Esophagus muscularis mucosa (tissue), 4 donors: ENCODE measurements at regions of chr22 and their contacts with region 1.

Region 1: DNA sequence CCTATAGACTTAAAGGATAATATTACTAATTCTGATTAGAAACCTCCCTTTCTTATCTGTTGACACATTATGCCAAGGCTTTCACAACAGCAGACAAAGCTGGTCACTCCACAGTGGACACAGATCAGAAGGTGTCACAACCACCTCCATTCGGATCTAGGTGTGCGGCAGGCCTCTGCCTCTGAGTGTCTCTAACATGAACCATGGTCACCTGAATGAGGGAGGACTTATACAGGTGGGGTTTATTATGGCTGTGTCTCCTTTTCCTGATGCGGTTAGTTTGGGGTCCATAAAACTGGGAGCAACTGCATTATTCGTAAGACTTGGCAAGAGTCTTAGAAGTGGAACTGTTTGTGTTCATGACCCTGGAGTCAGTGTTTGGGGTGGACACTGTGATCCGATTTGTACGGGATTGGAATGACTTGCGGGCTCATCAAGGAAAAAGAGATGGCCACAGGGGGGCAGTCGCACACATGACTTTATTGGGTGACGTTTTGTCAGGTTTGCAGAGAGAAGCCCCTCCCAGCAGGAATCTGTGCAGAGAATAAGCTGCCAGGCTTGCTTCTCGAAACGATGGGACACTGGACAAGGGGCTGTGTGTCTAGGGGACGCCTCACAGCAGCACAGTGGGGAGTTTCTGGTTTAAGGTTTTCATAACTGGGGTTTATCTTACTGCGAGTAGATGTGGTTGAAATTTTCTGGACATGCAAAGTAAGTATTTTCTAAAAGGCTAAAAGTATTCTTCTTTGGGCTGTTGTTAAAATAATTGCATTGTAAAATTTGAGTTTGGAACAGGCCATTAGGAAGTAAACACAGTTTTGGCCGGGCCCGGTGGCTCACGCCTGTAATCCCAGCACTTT is 90.6 kb downstream of the GAB4 start:
- DNase-seq: no peak
- H3K4me3 ChIP-seq: no peak overlapping the region
- H3K27ac ChIP-seq: no peak overlapping the region
- H3K4me1 ChIP-seq: no peaks in the 10 kb centered on the region
- H3K27me3 ChIP-seq: peaks cover 0 to 72% (median 2%) of the 10 kb centered on the region in 4 donors
- CTCF ChIP-seq: peak; percentile 35 to 57 (median 40)
- EP300 ChIP-seq: no peak
- POLR2A ChIP-seq: no peak

Region 2: DNA sequence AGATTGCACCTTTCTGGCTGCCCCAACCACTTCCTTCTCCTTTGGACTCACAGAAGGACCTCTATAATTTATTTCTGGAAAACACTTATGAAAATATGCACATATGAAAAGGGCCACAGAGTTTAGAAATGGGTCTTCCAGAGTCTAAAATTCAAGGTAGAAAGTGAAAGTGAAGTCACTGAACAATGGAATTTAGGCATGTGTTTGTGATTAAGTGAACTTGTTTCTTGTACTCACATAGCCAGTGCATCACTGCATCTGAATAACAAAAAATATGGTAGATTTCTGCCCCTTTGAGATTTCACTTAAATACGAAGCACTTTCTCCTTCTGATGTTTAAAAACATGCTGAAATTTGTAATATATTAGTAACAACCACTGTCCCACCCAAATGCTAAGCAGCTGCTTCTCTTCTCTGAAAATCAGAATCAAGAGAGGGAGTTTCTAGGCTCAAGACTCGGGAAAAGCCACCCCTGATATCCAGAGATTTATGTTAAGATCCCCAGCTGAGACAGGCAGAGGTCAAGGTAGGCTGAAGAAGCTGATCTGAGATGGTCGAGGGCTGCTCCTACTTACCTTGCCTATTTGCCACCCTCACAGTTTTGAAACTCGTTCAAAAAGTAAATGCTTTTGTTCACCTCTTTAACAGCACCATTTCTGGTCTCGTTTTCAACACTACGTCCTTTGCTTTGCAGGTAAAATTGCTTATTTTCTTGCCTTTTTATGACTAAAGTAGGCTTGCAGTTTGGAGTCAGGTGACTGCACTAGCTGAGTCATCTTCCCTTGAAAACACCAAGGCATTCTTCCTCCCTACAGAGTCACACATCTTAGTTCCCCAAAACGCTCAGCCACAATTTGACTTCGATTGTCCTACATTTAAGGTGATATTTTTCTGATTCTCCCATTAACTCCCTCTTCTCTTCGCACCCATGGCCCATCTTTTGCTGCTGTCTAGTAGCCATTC is 92.4 kb before region 1 on chr22 and contains the start of gene XKR3:
- intact Hi-C with region 1: no loop called
- DNase-seq: no peak
- H3K4me3 ChIP-seq: peak within 1 kb of the TSS in 2 of 4 donors; percentile 17 to 19
- H3K27ac ChIP-seq: no peak within 1 kb of the TSS
- H3K4me1 ChIP-seq: peaks cover 0 to 3% (median 0%) of the 10 kb centered on the region in 4 donors
- H3K27me3 ChIP-seq: no peaks in the 10 kb centered on the region
- CTCF ChIP-seq: no peak
- EP300 ChIP-seq: no peak
- POLR2A ChIP-seq: no peak
- total RNA-seq, gene XKR3: not detected

Region 3: DNA sequence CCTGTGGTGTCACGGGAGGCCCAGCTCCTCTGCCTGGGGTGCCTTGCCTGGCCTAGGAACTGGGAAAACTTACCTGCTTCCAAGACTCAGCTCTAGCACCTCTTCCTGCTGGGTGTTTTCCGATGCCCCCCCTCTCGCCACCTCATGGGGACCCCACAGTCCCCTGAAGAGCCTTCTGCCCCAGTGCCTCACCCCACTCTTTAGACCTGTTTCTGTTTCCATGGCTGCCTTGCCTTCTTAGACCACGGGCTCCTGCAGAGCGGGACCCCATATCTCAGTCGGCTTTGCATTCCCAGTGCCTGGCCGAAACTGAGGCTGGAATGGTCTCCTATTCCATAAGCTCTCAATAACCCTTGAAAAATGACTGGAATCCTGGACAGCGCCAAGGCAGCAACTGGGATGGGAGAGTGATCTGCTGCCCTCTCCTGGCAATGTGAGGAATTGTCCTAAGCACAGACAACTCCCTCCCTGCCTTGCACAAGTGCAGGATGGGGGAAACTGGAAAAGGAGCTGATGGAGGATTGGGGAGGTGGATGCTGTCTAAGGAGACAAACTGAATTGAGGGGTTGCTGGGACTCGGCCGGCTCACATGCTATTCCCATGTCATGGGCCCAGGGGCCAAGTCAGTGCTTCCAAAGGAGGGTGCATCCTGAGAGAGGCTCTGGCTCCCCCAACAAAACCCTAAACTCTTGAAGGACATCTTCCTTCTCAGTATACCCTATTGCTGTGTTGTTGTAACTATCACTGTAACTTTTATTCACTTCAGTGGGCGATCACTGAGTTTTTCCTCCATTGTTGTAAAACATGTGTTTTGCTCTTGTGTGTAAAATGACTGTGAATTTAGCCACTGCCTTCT is 140.8 kb after region 1 on chr22:
- intact Hi-C with region 1: loop called (anchors 5 kb)
- DNase-seq: peak; percentile 94
- H3K4me3 ChIP-seq: no peak overlapping the region
- H3K27ac ChIP-seq: no peak overlapping the region
- H3K4me1 ChIP-seq: peaks cover 0 to 12% (median 9%) of the 10 kb centered on the region in 4 donors
- H3K27me3 ChIP-seq: no peaks in the 10 kb centered on the region
- CTCF ChIP-seq: peak; percentile 77 to 95 (median 86)
- EP300 ChIP-seq: no peak
- POLR2A ChIP-seq: no peak

Region 4: DNA sequence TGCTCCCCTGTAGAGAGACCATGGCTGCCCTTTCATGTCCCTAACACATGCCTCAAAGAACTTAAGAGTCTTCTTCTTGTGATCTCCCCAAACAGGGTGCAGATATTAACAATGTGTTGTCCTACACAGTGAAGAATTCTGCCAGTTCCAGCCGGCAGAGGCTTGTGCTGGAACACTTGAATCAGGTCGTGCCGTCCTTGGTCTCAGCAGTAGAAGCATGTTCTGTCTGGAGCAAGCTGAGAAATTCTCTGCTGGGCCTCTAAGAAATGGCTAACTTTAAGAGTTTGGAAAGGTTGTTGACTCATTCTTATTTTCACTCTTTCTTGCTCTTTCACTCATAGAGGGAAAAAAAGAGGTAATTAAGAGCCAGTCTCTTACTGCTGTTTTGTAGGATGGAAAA is 574.9 kb after region 1 on chr22:
- intact Hi-C with region 1: loop called (anchors 10 kb)
- DNase-seq: no peak
- H3K4me3 ChIP-seq: no peak overlapping the region
- H3K27ac ChIP-seq: no peak overlapping the region
- H3K4me1 ChIP-seq: peaks cover 5 to 13% (median 11%) of the 10 kb centered on the region in 4 donors
- H3K27me3 ChIP-seq: no peaks in the 10 kb centered on the region
- CTCF ChIP-seq: no peak
- EP300 ChIP-seq: no peak
- POLR2A ChIP-seq: no peak